Activated B cell treated with CpG ODN at 0.5 μM for 24 hours (primary cell): ENCODE measurements at regions of chr6 and their contacts with region 1.

Region 1: DNA sequence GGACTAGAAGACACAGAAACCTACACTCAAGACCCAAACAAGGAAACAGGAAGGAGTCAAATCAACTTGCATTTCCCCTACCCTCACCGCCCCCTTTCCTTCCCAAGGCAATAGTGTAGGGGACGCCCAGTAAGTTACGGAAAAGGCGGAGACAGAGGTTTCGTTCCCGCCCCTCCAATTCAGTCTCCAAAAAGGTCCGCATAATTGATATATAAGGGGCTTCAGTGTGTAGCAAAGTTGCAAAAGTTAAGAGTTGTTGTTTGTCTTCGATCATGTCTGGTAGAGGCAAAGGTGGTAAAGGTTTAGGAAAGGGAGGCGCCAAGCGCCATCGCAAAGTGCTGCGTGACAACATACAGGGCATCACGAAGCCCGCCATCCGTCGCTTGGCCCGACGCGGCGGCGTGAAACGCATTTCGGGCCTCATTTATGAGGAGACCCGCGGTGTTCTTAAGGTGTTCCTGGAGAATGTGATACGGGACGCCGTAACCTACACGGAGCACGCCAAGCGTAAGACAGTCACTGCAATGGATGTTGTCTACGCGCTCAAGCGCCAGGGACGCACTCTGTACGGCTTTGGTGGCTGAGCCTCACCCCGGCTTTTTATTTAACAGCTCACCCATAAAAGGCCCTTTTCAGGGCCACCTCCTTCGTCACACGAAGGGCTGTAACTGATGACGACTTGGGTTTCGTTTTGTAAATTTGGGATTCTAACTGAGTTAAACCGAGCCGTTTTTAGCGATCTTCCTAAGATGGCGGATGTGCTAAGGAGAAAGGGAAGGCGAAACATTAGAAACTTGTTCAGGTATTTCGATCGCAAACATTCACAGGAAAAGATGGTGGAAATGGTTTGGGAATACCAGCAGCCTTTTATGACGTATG is 124.6 kb upstream of the BTN3A2 start:
- DNase-seq: peak; percentile 61
- ATAC-seq: peak; percentile 79
- H3K4me3 Mint-ChIP-seq: peak overlapping the region; percentile 82
- H3K27ac Mint-ChIP-seq: peak overlapping the region; percentile 92
- H3K4me1 Mint-ChIP-seq: peaks cover 26% of the 10 kb centered on the region
- H3K27me3 Mint-ChIP-seq: no peaks in the 10 kb centered on the region
- CTCF ChIP-seq: no peak

Region 2: DNA sequence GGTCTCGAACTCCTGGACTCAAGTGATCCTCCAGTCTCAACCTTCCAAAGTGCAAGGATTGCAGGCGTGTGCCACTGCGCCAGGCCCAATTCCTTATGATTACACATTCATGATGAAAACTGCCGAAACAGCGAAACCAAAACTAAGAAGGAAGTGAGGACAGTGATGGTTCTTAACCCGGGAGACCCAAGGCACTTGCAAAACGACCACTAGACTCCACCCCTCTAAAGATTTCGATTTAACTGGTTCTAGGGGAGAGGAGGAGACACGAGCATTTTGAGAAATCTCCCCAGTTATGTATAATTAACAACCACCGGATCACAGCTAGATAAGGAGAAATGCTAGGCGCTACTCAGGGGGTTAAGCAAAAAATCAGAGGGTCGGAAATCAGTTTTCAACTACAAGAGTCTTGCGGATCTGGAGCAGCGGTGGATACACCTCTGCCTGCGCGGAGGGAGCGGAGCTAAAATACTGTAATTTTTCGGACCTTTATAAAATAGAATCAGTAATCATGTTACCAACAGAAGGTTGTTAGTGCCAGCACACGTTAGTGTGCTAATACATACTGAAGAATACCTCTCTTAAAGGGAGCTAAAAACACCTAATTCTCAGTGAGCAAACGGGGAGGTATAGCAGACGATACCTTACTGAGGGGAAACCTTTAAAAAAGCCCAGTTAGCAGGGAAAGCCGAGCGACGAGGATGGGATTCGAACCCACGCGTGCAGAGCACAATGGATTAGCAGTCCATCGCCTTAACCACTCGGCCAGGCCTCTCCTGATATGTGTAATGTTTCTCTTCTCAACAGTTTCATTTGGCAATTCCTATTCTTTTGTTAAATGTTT is 64.6 kb after region 1 on chr6:
- CTCF ChIA-PET with region 1: no interaction called
- POLR2A ChIA-PET with region 1: no interaction called
- intact Hi-C with region 1: loop called (anchors 2 kb)
- DNase-seq: peak; percentile 39
- ATAC-seq: peak; percentile 87
- H3K4me3 Mint-ChIP-seq: peak overlapping the region; percentile 93
- H3K27ac Mint-ChIP-seq: peak overlapping the region; percentile 96
- H3K4me1 Mint-ChIP-seq: peaks cover 17% of the 10 kb centered on the region
- H3K27me3 Mint-ChIP-seq: no peaks in the 10 kb centered on the region
- CTCF ChIP-seq: no peak